Activated CD4-positive, alpha-beta memory T cell treated with anti-CD3 and anti-CD28 coated beads for 36 hours (primary cell): ENCODE measurements at regions of chr1 and their contacts with region 1.

Region 1: DNA sequence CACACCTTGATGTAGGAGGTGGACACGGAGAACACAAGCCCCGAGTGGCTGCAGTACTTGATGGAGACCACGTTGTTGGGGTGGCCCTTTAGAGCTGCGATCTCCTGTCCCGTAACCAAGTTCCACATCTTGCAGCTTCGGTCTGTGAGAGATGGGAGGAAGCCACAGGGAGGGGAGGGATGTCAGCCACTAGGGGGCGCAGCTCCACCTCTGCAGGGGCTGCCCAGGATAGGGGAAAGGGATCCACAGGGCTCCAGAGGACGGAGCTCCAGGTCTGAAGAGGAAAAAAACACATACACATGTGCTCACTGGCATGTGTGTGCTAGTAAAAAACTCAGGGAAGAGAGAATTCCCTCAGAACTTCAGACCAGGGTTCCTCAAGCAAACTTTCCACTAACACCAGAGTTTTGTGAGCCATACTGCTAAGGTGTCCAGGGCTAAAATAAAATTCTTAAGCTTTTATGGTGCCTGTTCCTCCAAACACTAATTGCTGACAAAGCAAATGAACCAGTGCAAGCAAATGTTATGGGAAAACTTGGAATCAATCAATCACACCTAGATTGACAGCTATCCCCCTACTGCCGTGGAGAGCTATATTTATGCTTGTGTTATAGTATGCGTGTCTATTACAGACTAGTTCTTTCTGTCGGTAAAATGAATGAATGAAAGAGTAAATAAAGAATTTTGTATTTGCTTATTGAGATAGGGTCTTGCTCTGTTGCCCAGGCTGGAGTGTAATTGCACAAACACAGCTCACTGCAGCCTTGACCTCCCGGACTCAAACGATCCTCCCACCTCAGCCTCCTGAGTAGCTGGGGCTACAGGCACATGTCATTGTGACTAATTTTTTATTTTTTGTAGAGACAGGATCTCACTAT is 43.7 kb downstream of the KIF21B start:
- DNase-seq: peak; percentile 81
- H3K4me3 Mint-ChIP-seq: no peak overlapping the region
- H3K27ac Mint-ChIP-seq: peak overlapping the region; percentile 25
- H3K4me1 Mint-ChIP-seq: no peaks in the 10 kb centered on the region
- H3K27me3 Mint-ChIP-seq: no peaks in the 10 kb centered on the region

Region 2: DNA sequence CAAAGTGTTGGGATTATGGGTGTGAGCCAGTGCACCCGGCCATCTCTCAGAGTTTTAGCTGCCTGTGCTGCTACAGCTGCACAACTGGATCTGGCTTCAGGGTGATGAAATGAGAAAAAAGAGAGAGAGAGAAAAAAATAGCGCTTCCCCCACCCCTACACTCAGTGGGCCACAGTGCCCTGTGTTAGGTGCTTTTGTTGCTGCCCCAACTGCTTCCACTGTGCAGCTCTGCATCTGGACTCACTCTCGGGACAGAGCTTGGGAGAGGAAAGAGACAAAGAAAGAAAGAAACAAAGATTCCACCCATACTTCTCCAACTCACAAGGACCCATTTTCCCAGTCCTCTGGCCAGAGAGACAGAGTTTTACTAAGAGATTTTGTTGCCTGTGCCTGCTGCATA is 34.7 kb before region 1 on chr1:
- CTCF ChIA-PET with region 1: interaction called, 11 read pairs
- POLR2A ChIA-PET with region 1: no interaction called
- intact Hi-C with region 1: no loop called
- DNase-seq: no peak
- H3K4me3 Mint-ChIP-seq: no peak overlapping the region
- H3K27ac Mint-ChIP-seq: no peak overlapping the region
- H3K4me1 Mint-ChIP-seq: no peaks in the 10 kb centered on the region
- H3K27me3 Mint-ChIP-seq: peaks cover 2% of the 10 kb centered on the region

Region 3: DNA sequence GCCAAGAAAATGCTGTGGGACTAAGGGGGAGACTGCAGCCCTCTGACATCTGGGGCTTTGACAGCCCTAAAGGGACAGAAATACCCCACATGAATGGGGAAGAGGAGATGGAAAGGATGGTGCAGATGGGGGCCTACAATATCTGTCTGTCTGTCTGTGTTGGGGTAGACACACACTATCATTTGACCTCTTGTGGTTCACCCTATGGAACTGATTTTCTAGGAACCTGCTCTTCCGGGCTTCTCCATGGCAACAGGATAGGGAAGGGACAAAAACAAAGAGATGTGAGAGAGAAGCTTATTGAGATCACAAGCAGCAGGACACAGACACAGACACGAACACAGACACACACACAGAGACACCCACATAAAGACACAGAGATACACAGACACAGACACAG is 26.6 kb after region 1 on chr1:
- CTCF ChIA-PET with region 1: interaction called, 14 read pairs
- POLR2A ChIA-PET with region 1: interaction called, 3 read pairs
- intact Hi-C with region 1: no loop called
- DNase-seq: no peak
- H3K4me3 Mint-ChIP-seq: no peak overlapping the region
- H3K27ac Mint-ChIP-seq: no peak overlapping the region
- H3K4me1 Mint-ChIP-seq: peaks cover 37% of the 10 kb centered on the region
- H3K27me3 Mint-ChIP-seq: no peaks in the 10 kb centered on the region

Region 4: GRCh38 chr1:201042779-201043461 is 63.1 kb after region 1 on chr1:
- CTCF ChIA-PET with region 1: interaction called, 433 read pairs
- POLR2A ChIA-PET with region 1: no interaction called
- intact Hi-C with region 1: loop called (anchors 1 kb)
- DNase-seq: peak; percentile 81
- H3K4me3 Mint-ChIP-seq: no peak overlapping the region
- H3K27ac Mint-ChIP-seq: no peak overlapping the region
- H3K4me1 Mint-ChIP-seq: peaks cover 3% of the 10 kb centered on the region
- H3K27me3 Mint-ChIP-seq: no peaks in the 10 kb centered on the region

Region 5: DNA sequence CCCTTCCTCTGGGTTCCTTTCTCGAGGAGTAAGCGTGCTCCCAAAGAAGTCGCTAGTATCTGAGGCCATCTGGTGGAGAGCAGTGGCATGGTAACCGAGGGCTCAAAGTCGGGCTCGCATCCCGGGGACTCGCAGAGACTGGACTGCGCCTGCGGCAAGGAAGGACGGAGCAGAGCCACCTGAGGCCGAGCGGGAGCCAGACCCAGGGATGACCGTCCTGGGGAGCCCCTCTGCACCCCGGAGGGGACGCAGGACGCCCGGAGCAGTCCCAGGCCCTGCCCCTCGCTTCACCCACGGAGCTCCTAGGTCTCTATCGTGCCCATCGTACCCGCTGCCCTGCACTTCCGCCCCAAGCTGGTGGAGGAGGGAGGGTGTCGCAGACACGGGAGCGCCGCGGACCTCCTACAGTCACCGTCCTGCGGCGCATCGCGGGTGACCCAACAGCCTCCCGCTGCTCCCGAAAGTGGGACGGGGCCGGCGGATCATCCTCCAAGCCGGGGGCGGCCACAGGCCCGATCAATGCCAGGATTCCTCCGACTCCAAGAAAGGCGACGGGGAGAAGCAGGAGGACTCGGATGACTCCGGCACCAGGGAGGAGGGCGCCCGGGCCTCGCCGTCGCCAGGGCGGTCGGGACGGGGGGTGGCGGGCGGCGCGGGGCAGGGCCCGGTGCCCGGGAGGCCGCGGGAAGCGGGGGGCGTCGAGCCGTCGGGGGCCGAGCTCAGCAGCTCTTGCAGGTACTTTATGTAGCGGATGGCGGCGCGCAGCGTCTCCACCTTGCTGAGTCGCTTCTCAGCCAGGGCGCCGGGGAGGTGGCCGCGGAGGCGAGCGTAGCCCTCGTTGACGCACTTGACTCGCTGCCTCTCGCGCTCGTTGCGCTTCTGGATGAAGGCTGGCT is 134.7 kb after region 1 on chr1:
- CTCF ChIA-PET with region 1: interaction called, 70 read pairs
- POLR2A ChIA-PET with region 1: no interaction called
- intact Hi-C with region 1: no loop called
- DNase-seq: peak; percentile 89
- H3K4me3 Mint-ChIP-seq: peak overlapping the region; percentile 86
- H3K27ac Mint-ChIP-seq: peak overlapping the region; percentile 6
- H3K4me1 Mint-ChIP-seq: no peaks in the 10 kb centered on the region
- H3K27me3 Mint-ChIP-seq: no peaks in the 10 kb centered on the region